SK-N-SH (cell line): ENCODE measurements at regions of chr7 and their contacts with region 1.

Region 1: GRCh38 chr7:155190688-155191087 is 107.0 kb upstream of the INSIG1 start:
- DNase-seq: peak; percentile 94
- H3K4me3 ChIP-seq: no peak overlapping the region; a peak in 1 of 4 replicates
- H3K27ac ChIP-seq: no peak overlapping the region
- H3K4me1 ChIP-seq: peaks cover 0 to 2% of the 10 kb centered on the region in 2 experiments; a peak in 1 of 4 replicates
- H3K27me3 ChIP-seq: peaks cover 19% of the 10 kb centered on the region; the same call in 1 of the 2 replicates
- CTCF ChIP-seq: peak; percentile 91
- EP300 ChIP-seq: no peak
- RAD21 ChIP-seq: peak; percentile 92

Region 2: DNA sequence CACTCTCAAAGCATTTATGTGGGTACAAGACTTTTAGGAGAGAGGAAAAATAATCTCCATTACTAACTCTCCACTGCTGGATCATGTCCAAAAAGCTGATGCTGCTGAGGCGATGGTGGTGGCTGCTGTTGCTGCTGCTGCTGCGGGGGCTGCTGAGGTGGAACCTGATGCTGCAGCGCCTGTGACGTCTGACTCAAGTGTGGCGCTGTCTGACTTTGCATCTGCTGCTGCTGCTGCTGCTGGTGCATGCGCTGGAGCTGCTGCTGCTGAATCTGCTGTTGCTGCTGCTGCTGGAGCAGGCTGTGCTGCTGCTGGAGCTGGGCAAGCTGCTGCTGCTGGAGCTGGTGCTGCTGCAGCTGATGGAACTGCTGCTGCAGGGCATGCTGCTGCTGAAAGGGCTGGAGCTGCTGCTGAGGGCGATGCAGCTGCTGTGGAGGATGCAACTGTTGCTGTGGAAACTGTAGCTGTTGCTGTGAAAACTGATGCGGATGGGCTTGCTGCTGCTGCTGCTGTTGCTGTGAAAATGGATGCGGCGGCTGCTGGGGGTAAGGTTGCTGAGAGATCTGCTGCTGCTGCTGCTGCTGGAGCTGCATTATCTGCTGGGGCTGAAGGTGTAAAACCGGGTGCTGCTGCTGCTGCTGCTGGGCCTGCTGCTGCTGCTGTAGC is 222.2 kb before region 1 on chr7:
- CTCF ChIA-PET with region 1: no interaction called
- POLR2A ChIA-PET with region 1: no interaction called
- DNase-seq: peak; percentile 32
- H3K4me3 ChIP-seq: no peak overlapping the region
- H3K27ac ChIP-seq: no peak overlapping the region
- H3K4me1 ChIP-seq: peaks cover 0 to 7% of the 10 kb centered on the region in 2 experiments; a peak in 1 of 4 replicates
- H3K27me3 ChIP-seq: no peaks in the 10 kb centered on the region
- CTCF ChIP-seq: no peak
- EP300 ChIP-seq: no peak
- RAD21 ChIP-seq: no peak

Region 3: DNA sequence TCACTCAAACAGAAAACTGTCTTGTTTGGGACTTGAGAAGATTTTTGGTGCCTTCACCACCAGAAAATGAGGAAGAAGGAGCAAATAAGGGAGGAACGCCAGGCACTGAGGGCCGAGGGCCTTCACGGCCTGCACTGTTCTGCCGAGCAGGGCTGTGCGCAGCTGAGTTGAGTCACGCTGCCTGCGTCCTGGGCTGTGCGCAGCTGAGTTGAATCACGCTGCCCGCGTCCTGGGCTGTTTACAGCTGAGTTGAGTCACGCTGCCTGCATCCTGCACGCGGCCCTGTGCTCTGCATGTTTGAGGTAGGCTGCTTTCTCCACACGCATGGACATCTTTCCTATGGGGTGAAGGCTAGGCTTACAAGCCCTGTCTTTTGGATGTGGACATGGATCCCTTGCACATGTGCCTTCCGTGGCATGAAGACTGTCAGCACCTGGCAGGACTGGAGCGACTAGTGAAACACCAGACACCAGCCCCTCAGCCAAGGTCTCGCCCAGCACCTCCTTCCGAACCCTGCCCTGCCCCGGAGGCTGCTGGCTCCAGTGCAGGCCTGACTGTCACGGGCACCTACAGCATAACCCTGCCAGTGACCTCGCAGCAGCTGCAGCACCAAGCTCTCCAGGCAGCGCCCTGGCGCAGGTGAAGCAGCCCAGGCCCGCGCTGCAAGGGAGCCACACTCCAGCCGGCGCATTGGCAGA is 23.9 kb before region 1 on chr7:
- CTCF ChIA-PET with region 1: interaction called, 14 read pairs
- POLR2A ChIA-PET with region 1: no interaction called
- DNase-seq: no peak
- H3K4me3 ChIP-seq: no peak overlapping the region
- H3K27ac ChIP-seq: no peak overlapping the region
- H3K4me1 ChIP-seq: no peaks in the 10 kb centered on the region
- H3K27me3 ChIP-seq: peaks cover 10% of the 10 kb centered on the region; the same call in 1 of the 2 replicates
- CTCF ChIP-seq: no peak
- EP300 ChIP-seq: no peak
- RAD21 ChIP-seq: no peak

Region 4: DNA sequence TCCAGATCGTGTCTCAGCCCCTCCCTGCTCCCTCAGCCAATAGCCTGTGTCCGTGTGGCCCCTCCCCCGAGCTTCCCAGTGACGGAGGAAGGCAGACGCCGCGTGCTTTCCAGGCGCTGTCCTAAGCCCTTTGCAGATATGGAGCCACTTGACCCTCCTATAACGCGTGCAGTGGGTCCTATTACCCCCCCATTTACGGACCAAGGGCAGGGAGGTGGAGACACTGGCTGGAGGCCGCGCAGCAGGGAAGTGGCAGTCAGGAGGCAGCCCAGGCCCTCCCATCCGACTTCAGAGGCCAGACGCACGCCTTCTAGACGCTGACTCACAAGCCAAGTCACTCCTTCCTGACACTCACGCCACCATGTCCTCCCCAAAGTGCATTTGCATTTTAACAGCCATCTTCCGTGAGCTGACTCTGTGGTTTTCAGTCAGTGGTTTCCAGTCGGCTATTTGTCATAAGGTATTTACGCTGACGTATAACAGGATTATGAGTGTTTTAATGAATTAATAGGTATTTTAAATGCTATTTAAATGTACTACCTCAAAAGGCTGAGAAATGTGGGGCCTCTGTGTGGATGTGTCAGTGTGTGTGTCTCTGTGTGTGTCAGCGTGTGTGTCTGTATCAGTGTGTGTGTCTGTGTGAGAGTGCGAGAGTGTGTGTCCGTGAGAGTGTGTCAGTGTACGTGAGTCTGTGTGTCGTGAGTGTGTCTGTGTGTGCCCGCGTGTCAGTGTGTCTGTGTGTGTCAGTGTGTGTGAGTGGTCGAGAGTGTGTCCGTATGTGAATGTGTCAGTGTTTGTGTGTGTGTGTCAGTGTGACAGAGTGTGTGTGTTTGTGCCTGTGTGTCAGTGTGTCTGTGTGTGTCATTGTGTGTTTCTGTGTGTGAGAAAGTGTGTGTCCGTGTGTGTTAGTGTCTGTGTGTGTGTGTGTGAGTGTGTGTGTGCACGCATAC is 15.0 kb after region 1 on chr7:
- CTCF ChIA-PET with region 1: interaction called, 28 read pairs
- POLR2A ChIA-PET with region 1: no interaction called
- DNase-seq: peak; percentile 65
- H3K4me3 ChIP-seq: no peak overlapping the region
- H3K27ac ChIP-seq: peak overlapping the region in 1 of 2 experiments; percentile 54; a peak in 2 of 4 replicates
- H3K4me1 ChIP-seq: peaks cover 4 to 15% of the 10 kb centered on the region in 2 experiments; a peak in 1 of 4 replicates
- H3K27me3 ChIP-seq: no peaks in the 10 kb centered on the region
- CTCF ChIP-seq: no peak
- EP300 ChIP-seq: peak in 1 of 2 experiments; percentile 22; a peak in 1 of 4 replicates
- RAD21 ChIP-seq: no peak

Region 5: GRCh38 chr7:155213955-155214740 is 23.5 kb after region 1 on chr7:
- CTCF ChIA-PET with region 1: interaction called, 24 read pairs
- POLR2A ChIA-PET with region 1: no interaction called
- DNase-seq: no peak
- H3K4me3 ChIP-seq: no peak overlapping the region
- H3K27ac ChIP-seq: no peak overlapping the region; a peak in 1 of 4 replicates
- H3K4me1 ChIP-seq: peaks cover 0 to 13% of the 10 kb centered on the region in 2 experiments; a peak in 1 of 4 replicates
- H3K27me3 ChIP-seq: no peaks in the 10 kb centered on the region
- CTCF ChIP-seq: no peak
- EP300 ChIP-seq: no peak
- RAD21 ChIP-seq: no peak

Region 6: GRCh38 chr7:155252444-155252887 is 61.8 kb after region 1 on chr7:
- CTCF ChIA-PET with region 1: interaction called, 10 read pairs
- POLR2A ChIA-PET with region 1: no interaction called
- DNase-seq: no peak
- H3K4me3 ChIP-seq: no peak overlapping the region
- H3K27ac ChIP-seq: no peak overlapping the region
- H3K4me1 ChIP-seq: peaks cover 0 to 41% of the 10 kb centered on the region in 2 experiments; a peak in 2 of 4 replicates
- H3K27me3 ChIP-seq: no peaks in the 10 kb centered on the region
- CTCF ChIP-seq: no peak
- EP300 ChIP-seq: no peak
- RAD21 ChIP-seq: 0 out of 2 replicates have a peak, but pooled peaks have one; percentile 7

Region 7: GRCh38 chr7:155263332-155264143 is 72.8 kb after region 1 on chr7:
- CTCF ChIA-PET with region 1: interaction called, 12 read pairs
- POLR2A ChIA-PET with region 1: no interaction called
- DNase-seq: peak; percentile 65
- H3K4me3 ChIP-seq: no peak overlapping the region
- H3K27ac ChIP-seq: no peak overlapping the region
- H3K4me1 ChIP-seq: peaks cover 0 to 13% of the 10 kb centered on the region in 2 experiments; a peak in 2 of 4 replicates
- H3K27me3 ChIP-seq: peaks cover 5% of the 10 kb centered on the region
- CTCF ChIP-seq: peak; percentile 33
- EP300 ChIP-seq: no peak
- RAD21 ChIP-seq: peak; percentile 62

Region 8: DNA sequence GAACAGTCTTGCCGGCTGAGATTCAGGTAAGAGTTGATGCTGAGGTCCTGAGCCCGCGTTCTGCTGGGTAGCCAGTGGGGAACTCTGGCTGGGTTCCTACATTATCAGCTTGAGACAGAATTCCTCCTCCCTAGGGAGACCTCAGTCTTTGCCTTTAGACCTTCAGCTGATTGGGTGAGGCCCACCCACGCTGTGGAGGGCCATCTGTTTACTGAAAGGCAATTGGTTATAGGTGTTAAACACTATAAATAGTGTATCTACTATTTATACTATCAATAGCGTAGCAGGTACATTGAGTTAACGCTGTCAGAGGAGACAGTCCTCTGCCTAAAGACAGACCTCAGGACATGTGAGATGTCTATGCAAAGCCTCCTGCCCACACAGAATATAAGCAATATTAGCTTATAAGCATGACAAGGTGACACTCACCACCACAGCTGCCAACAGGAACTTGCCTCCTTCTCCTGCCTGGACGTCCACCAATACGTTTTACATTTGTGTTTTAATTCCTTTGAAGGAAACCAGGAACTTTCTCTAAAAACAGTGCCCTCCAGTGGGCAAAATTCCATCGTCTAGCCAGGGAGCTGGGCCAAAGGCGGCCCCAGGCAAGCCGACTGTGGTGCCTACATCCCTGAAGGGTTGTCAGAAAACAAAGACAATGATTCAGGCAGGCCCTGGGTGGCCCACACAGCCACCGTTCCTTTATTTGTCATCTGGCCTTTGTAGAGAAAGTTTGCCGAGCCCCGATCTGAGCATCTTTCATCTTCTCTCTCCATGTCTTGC is 165.8 kb after region 1 on chr7:
- CTCF ChIA-PET with region 1: interaction called, 15 read pairs
- POLR2A ChIA-PET with region 1: no interaction called
- DNase-seq: peak; percentile 67
- H3K4me3 ChIP-seq: no peak overlapping the region; a peak in 1 of 4 replicates
- H3K27ac ChIP-seq: no peak overlapping the region
- H3K4me1 ChIP-seq: peaks cover 0 to 5% of the 10 kb centered on the region in 2 experiments; a peak in 1 of 4 replicates
- H3K27me3 ChIP-seq: peaks cover 49% of the 10 kb centered on the region
- CTCF ChIP-seq: peak; percentile 60
- EP300 ChIP-seq: no peak
- RAD21 ChIP-seq: peak; percentile 34; the same call in 1 of the 2 replicates